ENCODE measurements at regions of chr14 and their contacts with region 1.

Region 1: GRCh38 chr14:69726761-69727511 is 40.0 kb upstream of the SRSF5 start:
- DNase-seq: peak; percentile 50
- H3K4me3 ChIP-seq: peak overlapping the region in 2 of 3 experiments; percentile 40 to 41
- H3K27ac ChIP-seq: no peak overlapping the region
- H3K4me1 ChIP-seq: peaks cover 8% of the 10 kb centered on the region
- H3K27me3 ChIP-seq: no peaks in the 10 kb centered on the region
- CTCF ChIP-seq: peak; percentile 85 to 98

Region 2: GRCh38 chr14:69242311-69243224 is 484.4 kb before region 1 on chr14:
- CTCF ChIA-PET with region 1: no interaction called
- dilution Hi-C with region 1: no loop called
- in situ Hi-C with region 1: no loop called
- intact Hi-C with region 1: loop called (anchors 10 kb)
- DNase-seq: peak; percentile 32
- H3K4me3 ChIP-seq: no peak overlapping the region
- H3K27ac ChIP-seq: no peak overlapping the region
- H3K4me1 ChIP-seq: no peaks in the 10 kb centered on the region
- H3K27me3 ChIP-seq: no peaks in the 10 kb centered on the region
- CTCF ChIP-seq: peak; percentile 62 to 66

Region 3: GRCh38 chr14:69535230-69535848 is 191.6 kb before region 1 on chr14:
- CTCF ChIA-PET with region 1: no interaction called
- dilution Hi-C with region 1: no loop called
- in situ Hi-C with region 1: no loop called
- intact Hi-C with region 1: loop called (anchors 1 kb)
- DNase-seq: peak; percentile 31
- H3K4me3 ChIP-seq: no peak overlapping the region
- H3K27ac ChIP-seq: no peak overlapping the region
- H3K4me1 ChIP-seq: peaks cover 5% of the 10 kb centered on the region
- H3K27me3 ChIP-seq: no peaks in the 10 kb centered on the region
- CTCF ChIP-seq: peak; percentile 85 to 88

Region 4: GRCh38 chr14:69580009-69580577 is 146.8 kb before region 1 on chr14:
- CTCF ChIA-PET with region 1: interaction called, 4 read pairs
- dilution Hi-C with region 1: no loop called
- in situ Hi-C with region 1: loop called (anchors 5 kb)
- intact Hi-C with region 1: loop called (anchors 1 kb)
- DNase-seq: peak; percentile 83
- H3K4me3 ChIP-seq: no peak overlapping the region
- H3K27ac ChIP-seq: no peak overlapping the region
- H3K4me1 ChIP-seq: no peaks in the 10 kb centered on the region
- H3K27me3 ChIP-seq: no peaks in the 10 kb centered on the region
- CTCF ChIP-seq: peak; percentile 24 to 47

Region 5: GRCh38 chr14:69586404-69586803 is 140.5 kb before region 1 on chr14:
- CTCF ChIA-PET with region 1: interaction called, 4 read pairs
- dilution Hi-C with region 1: no loop called
- in situ Hi-C with region 1: loop called (anchors 5 kb)
- intact Hi-C with region 1: loop called (anchors 1 kb)
- DNase-seq: no peak
- H3K4me3 ChIP-seq: no peak overlapping the region
- H3K27ac ChIP-seq: no peak overlapping the region
- H3K4me1 ChIP-seq: no peaks in the 10 kb centered on the region
- H3K27me3 ChIP-seq: no peaks in the 10 kb centered on the region
- CTCF ChIP-seq: no peak

Region 6: GRCh38 chr14:69637503-69638030 is 89.4 kb before region 1 on chr14:
- CTCF ChIA-PET with region 1: no interaction called
- dilution Hi-C with region 1: no loop called
- in situ Hi-C with region 1: no loop called
- intact Hi-C with region 1: no loop called
- DNase-seq: no peak
- H3K4me3 ChIP-seq: no peak overlapping the region
- H3K27ac ChIP-seq: no peak overlapping the region
- H3K4me1 ChIP-seq: peaks cover 47% of the 10 kb centered on the region
- H3K27me3 ChIP-seq: no peaks in the 10 kb centered on the region
- CTCF ChIP-seq: no peak

Region 7: GRCh38 chr14:69921052-69921451 is 194.1 kb after region 1 on chr14:
- CTCF ChIA-PET with region 1: no interaction called
- dilution Hi-C with region 1: no loop called
- in situ Hi-C with region 1: no loop called
- intact Hi-C with region 1: no loop called
- DNase-seq: peak; percentile 35
- H3K4me3 ChIP-seq: no peak overlapping the region
- H3K27ac ChIP-seq: no peak overlapping the region
- H3K4me1 ChIP-seq: no peaks in the 10 kb centered on the region
- H3K27me3 ChIP-seq: no peaks in the 10 kb centered on the region
- CTCF ChIP-seq: no peak

Region 8: GRCh38 chr14:70027785-70028428 is 301.0 kb after region 1 on chr14:
- CTCF ChIA-PET with region 1: interaction called, 3 read pairs
- dilution Hi-C with region 1: no loop called
- in situ Hi-C with region 1: no loop called
- intact Hi-C with region 1: loop called (anchors 1 kb)
- DNase-seq: no peak
- H3K4me3 ChIP-seq: no peak overlapping the region
- H3K27ac ChIP-seq: no peak overlapping the region
- H3K4me1 ChIP-seq: peaks cover 17% of the 10 kb centered on the region
- H3K27me3 ChIP-seq: no peaks in the 10 kb centered on the region
- CTCF ChIP-seq: peak; percentile 88 to 97

Measured in mammary epithelial cell (primary cell).